Activated CD4-positive, alpha-beta T cell treated with anti-CD3 and anti-CD28 coated beads for 36 hours (primary cell): ENCODE measurements at regions of chr21 and their contacts with region 1.

Region 1: DNA sequence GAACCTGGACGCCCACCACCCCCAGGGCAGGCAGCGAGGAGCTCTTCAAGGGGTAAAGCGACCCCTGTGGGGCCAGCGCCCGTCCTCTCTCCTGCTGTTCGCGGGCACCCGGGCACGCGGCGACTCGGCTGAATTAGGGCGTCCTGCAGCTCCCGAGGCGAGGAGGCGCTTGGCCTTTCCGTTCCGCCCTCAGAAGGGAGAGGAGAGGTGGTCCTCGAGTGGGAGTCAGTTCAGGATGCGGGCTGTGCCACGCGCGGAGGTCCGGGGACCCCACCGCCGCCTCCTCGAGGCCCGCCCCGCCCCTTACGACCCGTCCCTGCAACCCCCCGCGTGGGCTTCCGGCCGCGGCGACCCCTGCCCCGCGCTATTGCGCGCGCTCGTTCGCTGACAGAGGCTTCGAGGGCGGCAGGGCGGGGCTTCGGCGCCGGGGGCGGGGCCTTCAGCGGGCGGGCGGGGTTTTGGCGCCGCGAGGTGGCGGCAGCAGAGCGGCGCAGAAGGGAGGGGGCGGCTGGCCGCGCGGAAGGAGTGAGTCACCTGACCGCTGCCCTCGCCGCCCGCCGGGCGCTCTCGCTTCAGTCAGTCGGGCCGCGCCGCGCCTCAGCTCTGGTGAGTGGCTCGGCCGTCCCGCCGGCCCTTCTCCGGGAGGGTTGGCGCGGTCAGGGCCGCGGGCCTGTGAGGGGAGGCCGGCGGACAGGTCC is at the start of gene BACH1:
- DNase-seq: peak; percentile 95
- ATAC-seq: peak; percentile 72
- H3K4me3 Mint-ChIP-seq: peak within 1 kb of the TSS; percentile 87
- H3K27ac Mint-ChIP-seq: peak within 1 kb of the TSS; percentile 96
- H3K4me1 Mint-ChIP-seq: peaks cover 62% of the 10 kb centered on the region
- H3K27me3 Mint-ChIP-seq: no peaks in the 10 kb centered on the region
- total RNA-seq, gene BACH1: 24.1 to 27.0 TPM

Region 2: DNA sequence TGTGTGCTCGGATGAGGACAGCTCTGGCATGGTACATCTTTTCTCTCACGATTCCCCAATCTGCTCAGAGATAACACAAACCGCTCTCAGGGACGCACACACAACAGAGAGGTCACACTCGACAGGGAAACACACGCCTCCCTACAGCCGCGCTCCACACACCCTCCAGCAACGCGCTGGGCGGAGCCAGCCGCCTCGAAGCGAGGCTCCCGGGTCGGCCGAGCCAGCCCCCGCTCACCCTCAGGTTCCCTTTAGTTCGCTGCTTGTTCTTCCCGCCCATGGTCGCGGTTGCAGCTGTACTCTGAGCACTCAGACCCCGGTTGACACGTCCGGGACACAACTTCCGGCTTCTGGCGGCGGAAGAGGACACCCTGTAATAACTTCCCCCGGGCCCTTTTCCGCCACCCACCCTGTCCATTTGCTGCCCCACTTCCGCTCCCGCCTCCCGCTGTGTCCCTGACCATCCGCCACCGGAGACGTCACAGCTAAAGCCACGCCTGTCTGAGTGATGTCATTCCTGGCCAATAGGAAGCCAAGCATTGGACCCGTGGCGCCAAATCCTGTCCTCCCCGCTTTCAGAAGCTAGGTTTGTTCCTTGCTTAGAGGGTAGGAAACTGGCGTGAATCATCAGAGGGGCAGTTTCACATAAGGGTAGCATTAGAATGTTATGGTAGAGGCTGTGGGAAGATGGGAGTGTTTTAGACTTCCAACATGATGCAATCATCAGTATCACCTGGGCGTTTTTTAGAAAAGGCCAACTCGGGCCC is 305.8 kb before region 1 on chr21 and contains the start of gene LTN1:
- CTCF ChIA-PET with region 1: no interaction called
- POLR2A ChIA-PET with region 1: no interaction called
- intact Hi-C with region 1: loop called in 1 of 2 experiments (anchors 1 kb)
- DNase-seq: peak; percentile 100
- ATAC-seq: peak; percentile 92
- H3K4me3 Mint-ChIP-seq: peak within 1 kb of the TSS; percentile 83
- H3K27ac Mint-ChIP-seq: peak within 1 kb of the TSS; percentile 90
- H3K4me1 Mint-ChIP-seq: peaks cover 44% of the 10 kb centered on the region
- H3K27me3 Mint-ChIP-seq: no peaks in the 10 kb centered on the region
- total RNA-seq, gene LTN1: 26.6 to 29.4 TPM

Region 3: GRCh38 chr21:29078869-29079767 is 219.4 kb before region 1 on chr21:
- CTCF ChIA-PET with region 1: interaction called, 9 read pairs
- POLR2A ChIA-PET with region 1: interaction called, 9 read pairs
- intact Hi-C with region 1: loop called in 1 of 2 experiments (anchors 2 kb)
- DNase-seq: peak; percentile 61
- ATAC-seq: peak; percentile 62
- H3K4me3 Mint-ChIP-seq: peak overlapping the region; percentile 80
- H3K27ac Mint-ChIP-seq: peak overlapping the region; percentile 85
- H3K4me1 Mint-ChIP-seq: peaks cover 59% of the 10 kb centered on the region
- H3K27me3 Mint-ChIP-seq: no peaks in the 10 kb centered on the region

Region 4: GRCh38 chr21:29181799-29182470 is 116.6 kb before region 1 on chr21:
- CTCF ChIA-PET with region 1: interaction called, 3 read pairs
- POLR2A ChIA-PET with region 1: interaction called, 4 read pairs
- intact Hi-C with region 1: loop called in 1 of 2 experiments (anchors 1 kb)
- DNase-seq: peak; percentile 30
- ATAC-seq: peak; percentile 85
- H3K4me3 Mint-ChIP-seq: peak overlapping the region; percentile 53
- H3K27ac Mint-ChIP-seq: peak overlapping the region; percentile 90
- H3K4me1 Mint-ChIP-seq: peaks cover 17% of the 10 kb centered on the region
- H3K27me3 Mint-ChIP-seq: no peaks in the 10 kb centered on the region

Region 5: GRCh38 chr21:29245104-29245643 is 53.3 kb before region 1 on chr21:
- CTCF ChIA-PET with region 1: interaction called, 11 read pairs
- POLR2A ChIA-PET with region 1: interaction called, 17 read pairs
- intact Hi-C with region 1: loop called (anchors 1 to 5 kb)
- DNase-seq: peak; percentile 53
- ATAC-seq: peak; percentile 99
- H3K4me3 Mint-ChIP-seq: no peak overlapping the region
- H3K27ac Mint-ChIP-seq: peak overlapping the region; percentile 28
- H3K4me1 Mint-ChIP-seq: peaks cover 13% of the 10 kb centered on the region
- H3K27me3 Mint-ChIP-seq: peaks cover 8% of the 10 kb centered on the region

Region 6: DNA sequence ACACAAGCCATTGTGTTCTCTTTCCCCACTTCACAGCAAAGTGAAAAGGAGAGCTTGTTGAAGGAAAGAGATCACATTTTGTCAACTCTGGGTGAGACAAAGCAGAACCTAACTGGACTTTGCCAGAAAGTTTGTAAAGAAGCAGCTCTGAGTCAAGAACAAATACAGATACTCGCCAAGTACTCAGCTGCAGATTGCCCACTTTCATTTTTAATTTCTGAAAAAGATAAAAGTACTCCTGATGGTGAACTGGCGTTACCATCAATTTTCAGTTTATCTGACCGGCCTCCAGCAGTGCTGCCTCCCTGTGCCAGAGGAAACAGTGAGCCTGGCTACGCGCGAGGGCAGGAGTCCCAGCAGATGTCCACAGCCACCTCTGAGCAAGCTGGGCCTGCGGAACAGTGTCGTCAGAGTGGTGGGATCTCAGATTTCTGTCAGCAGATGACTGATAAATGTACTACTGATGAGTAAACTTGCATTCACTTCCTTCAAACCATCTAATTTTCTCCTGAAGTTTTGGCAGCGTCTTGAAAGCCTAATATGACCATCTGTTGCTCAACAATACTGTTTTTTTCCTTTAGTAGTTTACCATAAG is 44.0 kb after region 1 on chr21:
- CTCF ChIA-PET with region 1: interaction called, 3 read pairs
- POLR2A ChIA-PET with region 1: interaction called, 3 read pairs
- intact Hi-C with region 1: loop called in 1 of 2 experiments (anchors 1 kb)
- DNase-seq: peak; percentile 79
- ATAC-seq: peak; percentile 94
- H3K4me3 Mint-ChIP-seq: peak overlapping the region; percentile 29
- H3K27ac Mint-ChIP-seq: peak overlapping the region; percentile 79
- H3K4me1 Mint-ChIP-seq: peaks cover 42% of the 10 kb centered on the region
- H3K27me3 Mint-ChIP-seq: no peaks in the 10 kb centered on the region

Region 7: GRCh38 chr21:29656504-29657239 is 358.2 kb after region 1 on chr21:
- CTCF ChIA-PET with region 1: no interaction called
- POLR2A ChIA-PET with region 1: no interaction called
- intact Hi-C with region 1: loop called in 1 of 2 experiments (anchors 2 kb)
- DNase-seq: peak; percentile 7
- ATAC-seq: peak; percentile 98
- H3K4me3 Mint-ChIP-seq: peak overlapping the region; percentile 48
- H3K27ac Mint-ChIP-seq: peak overlapping the region; percentile 82
- H3K4me1 Mint-ChIP-seq: peaks cover 34% of the 10 kb centered on the region
- H3K27me3 Mint-ChIP-seq: peaks cover 2% of the 10 kb centered on the region